ENCODE measurements at regions of chr7 and their contacts with region 1.

Region 1: GRCh38 chr7:49324707-49325106 is 400.4 kb downstream of the CDC14C start:
- DNase-seq: peak; percentile 2
- H3K4me3 ChIP-seq: no peak overlapping the region
- H3K27ac ChIP-seq: no peak overlapping the region
- H3K4me1 ChIP-seq: no peaks in the 10 kb centered on the region
- H3K27me3 ChIP-seq: no peaks in the 10 kb centered on the region
- CTCF ChIP-seq: peak; percentile 52 to 68

Region 2: DNA sequence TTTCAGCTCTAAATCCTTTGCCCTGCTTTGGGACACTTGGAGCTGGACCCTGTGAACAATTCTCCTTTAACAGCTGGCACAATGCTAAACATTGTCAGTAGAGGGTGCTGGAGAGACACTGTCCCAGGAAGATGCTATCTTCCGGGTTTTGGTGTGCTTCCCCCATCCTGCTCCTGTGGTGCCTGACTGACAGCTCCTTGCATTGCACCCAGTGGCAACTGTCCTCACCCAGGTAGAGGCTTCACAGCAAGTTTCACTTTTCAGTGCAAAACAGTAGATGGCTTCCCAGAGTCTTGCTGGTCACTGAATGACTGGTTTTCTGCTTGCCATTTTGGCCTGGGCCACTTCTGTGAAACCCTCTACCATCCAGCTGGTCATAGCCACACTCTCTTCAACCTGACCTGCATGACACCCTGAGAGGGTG is 323.1 kb before region 1 on chr7:
- CTCF ChIA-PET with region 1: no interaction called
- dilution Hi-C with region 1: no loop called
- in situ Hi-C with region 1: no loop called
- intact Hi-C with region 1: loop called (anchors 1 kb)
- DNase-seq: peak; percentile 31
- H3K4me3 ChIP-seq: no peak overlapping the region
- H3K27ac ChIP-seq: no peak overlapping the region
- H3K4me1 ChIP-seq: no peaks in the 10 kb centered on the region
- H3K27me3 ChIP-seq: peaks cover 2% of the 10 kb centered on the region
- CTCF ChIP-seq: peak; percentile 75 to 83

Region 3: DNA sequence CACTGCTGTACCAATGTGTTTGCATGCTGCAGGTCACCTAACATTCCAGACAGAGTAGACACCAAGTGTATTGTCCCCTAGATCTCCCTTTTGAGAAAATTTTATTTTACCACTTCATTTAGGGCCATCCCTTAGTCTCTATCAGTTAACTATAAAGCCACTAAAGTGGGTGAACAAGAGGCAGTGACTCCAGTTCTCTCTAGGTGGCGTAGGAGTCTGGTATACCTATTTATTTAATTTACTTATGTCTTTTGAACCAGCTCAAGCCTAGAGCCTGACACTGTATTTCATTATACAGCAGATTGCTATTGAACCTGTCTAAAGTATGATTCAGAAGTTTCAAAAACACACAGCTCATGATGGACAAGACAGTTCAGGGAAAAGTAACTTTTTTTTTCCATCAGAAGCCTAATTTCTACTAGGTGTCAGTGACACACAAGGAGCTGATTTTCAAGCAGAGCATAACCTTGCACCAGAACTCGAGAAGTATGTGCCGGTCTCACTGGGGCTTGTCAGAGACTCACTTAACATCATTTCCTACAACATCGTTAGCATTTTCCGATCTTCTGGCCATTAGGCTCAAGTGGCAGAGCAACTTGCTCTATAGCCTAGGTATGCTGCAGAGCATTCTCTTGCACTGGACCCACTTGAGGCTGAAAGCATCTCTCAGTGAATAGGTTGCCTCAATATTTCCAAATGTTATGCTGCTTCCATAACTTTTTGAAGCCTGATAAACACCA is 224.9 kb before region 1 on chr7:
- CTCF ChIA-PET with region 1: no interaction called
- dilution Hi-C with region 1: no loop called
- in situ Hi-C with region 1: no loop called
- intact Hi-C with region 1: loop called (anchors 10 kb)
- DNase-seq: no peak
- H3K4me3 ChIP-seq: no peak overlapping the region
- H3K27ac ChIP-seq: no peak overlapping the region
- H3K4me1 ChIP-seq: no peaks in the 10 kb centered on the region
- H3K27me3 ChIP-seq: no peaks in the 10 kb centered on the region
- CTCF ChIP-seq: peak; percentile 20 to 57

Region 4: GRCh38 chr7:49273897-49274296 is 50.8 kb before region 1 on chr7:
- CTCF ChIA-PET with region 1: no interaction called
- dilution Hi-C with region 1: no loop called
- in situ Hi-C with region 1: no loop called
- intact Hi-C with region 1: loop called (anchors 1 kb)
- DNase-seq: no peak
- H3K4me3 ChIP-seq: no peak overlapping the region
- H3K27ac ChIP-seq: no peak overlapping the region
- H3K4me1 ChIP-seq: no peaks in the 10 kb centered on the region
- H3K27me3 ChIP-seq: peaks cover 4% of the 10 kb centered on the region
- CTCF ChIP-seq: no peak

Measured in mammary epithelial cell (primary cell).